ENCODE measurements at regions of chr16 and their contacts with region 1.

Region 1: GRCh38 chr16:12573730-12574383 is 229.8 kb downstream of the CPPED1 start:
- DNase-seq: peak; percentile 79
- ATAC-seq: peak; percentile 75
- H3K4me3 Mint-ChIP-seq: no peak overlapping the region
- H3K27ac Mint-ChIP-seq: peak overlapping the region; percentile 24
- H3K4me1 Mint-ChIP-seq: peaks cover 22% of the 10 kb centered on the region
- H3K27me3 Mint-ChIP-seq: no peaks in the 10 kb centered on the region

Region 2: GRCh38 chr16:12589676-12590075 is 15.8 kb after region 1 on chr16:
- CTCF ChIA-PET with region 1: no interaction called
- DNase-seq: no peak
- ATAC-seq: no peak
- H3K4me3 Mint-ChIP-seq: no peak overlapping the region
- H3K27ac Mint-ChIP-seq: no peak overlapping the region
- H3K4me1 Mint-ChIP-seq: peaks cover 9% of the 10 kb centered on the region
- H3K27me3 Mint-ChIP-seq: peaks cover 15% of the 10 kb centered on the region

Region 3: DNA sequence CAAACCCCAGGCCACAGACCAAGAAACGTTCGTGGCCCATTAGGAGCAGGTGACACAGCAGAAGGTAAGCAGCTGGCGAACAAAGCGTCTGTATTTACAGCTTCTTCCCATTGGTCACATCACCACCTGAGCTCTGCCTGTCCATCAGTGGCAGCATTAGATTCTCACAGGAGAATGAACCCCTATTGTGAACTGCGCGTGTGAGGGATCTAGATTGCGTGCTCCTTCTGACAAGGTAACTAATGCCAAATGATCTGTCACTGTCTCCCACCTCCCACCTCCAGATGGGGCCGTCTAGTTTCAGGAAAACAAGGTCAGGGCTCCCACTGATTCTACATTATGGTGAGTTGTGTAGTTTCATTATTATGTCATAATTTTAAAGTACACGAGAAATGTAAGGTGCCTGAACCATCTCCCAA is 43.6 kb after region 1 on chr16:
- CTCF ChIA-PET with region 1: no interaction called
- DNase-seq: no peak
- ATAC-seq: no peak
- H3K4me3 Mint-ChIP-seq: no peak overlapping the region
- H3K27ac Mint-ChIP-seq: no peak overlapping the region
- H3K4me1 Mint-ChIP-seq: peaks cover 28% of the 10 kb centered on the region
- H3K27me3 Mint-ChIP-seq: peaks cover 4% of the 10 kb centered on the region

Region 4: DNA sequence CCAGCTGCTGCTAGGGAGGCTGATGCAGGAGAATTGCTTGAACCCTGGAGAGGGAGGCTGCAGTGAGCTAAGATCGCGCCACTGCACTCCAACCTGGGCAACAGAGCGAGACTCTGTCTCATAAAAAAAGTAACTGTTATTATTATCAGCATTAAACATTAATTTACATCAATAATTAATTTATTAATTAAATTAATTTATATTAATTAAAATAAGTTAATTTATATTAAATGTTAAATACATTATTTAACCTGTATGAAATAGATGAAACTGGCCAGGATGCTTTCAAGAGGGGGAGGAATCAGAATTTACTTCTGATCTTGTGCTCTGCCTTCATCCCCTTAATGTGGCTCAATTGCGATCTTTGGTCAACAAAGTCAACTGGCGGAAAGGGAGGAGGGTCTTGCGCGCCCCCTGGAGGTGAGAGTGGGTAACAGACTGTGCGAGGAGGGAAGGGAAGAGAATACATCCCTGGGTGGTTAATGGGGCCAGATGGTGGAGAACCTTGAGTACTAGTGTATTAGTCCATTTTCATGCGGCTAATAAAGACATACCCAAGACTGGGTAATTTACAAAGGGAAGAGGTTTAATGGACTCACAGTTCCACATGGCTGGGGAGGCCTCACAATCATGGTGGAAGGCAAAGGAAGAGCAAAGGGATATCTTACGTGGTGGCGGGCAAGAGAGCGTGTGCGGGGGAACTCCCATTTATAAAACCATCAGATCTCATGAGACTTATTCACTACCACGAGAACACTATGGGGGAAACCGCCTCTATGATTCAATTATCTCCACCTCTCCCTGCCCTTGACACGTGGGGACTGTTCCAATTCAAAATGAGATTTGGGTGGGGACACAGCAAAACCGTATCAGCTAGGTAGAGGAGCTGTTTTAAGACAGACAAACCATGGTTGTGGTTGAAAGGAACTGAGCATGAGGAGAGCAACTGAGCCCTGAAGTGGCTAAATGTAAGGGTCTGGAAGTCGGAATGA is 245.6 kb after region 1 on chr16:
- CTCF ChIA-PET with region 1: interaction called, 24 read pairs
- DNase-seq: peak; percentile 80
- ATAC-seq: peak; percentile 45
- H3K4me3 Mint-ChIP-seq: no peak overlapping the region
- H3K27ac Mint-ChIP-seq: no peak overlapping the region
- H3K4me1 Mint-ChIP-seq: peaks cover 26% of the 10 kb centered on the region
- H3K27me3 Mint-ChIP-seq: peaks cover 11% of the 10 kb centered on the region